Colonic mucosa (tissue), 4 donors: ENCODE measurements at regions of chrX and their contacts with region 1.

Region 1: DNA sequence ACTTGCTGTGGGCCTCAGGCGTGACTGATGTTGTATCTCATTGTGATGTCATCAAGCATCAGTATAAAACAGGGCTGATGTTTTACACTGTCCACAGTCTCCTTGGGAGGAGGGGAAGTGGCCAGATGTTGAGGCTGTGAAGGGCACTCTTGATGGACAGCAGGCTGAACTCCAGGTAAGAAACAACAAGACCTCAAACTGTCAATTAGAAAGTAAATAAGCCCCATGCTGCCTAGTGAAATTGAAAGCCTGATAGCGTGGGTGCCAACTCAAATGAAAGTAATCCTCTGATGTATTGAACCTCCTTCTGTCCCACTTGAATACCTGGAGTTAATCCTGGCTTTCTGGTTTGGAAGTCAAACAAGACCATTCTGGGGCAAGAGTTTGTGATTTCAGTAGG is 19.7 kb downstream of the VSIG1 start:
- DNase-seq: no peak
- H3K4me3 ChIP-seq: no peak overlapping the region
- H3K27ac ChIP-seq: no peak overlapping the region
- H3K4me1 ChIP-seq: no peaks in the 10 kb centered on the region
- H3K27me3 ChIP-seq: peaks cover 3% of the 10 kb centered on the region
- CTCF ChIP-seq: no peak

Region 2: GRCh38 chrX:108018656-108019381 is 45.8 kb before region 1 on chrX:
- intact Hi-C with region 1: loop called (anchors 5 kb)
- DNase-seq: no peak
- H3K4me3 ChIP-seq: no peak overlapping the region
- H3K27ac ChIP-seq: no peak overlapping the region
- H3K4me1 ChIP-seq: no peaks in the 10 kb centered on the region
- H3K27me3 ChIP-seq: no peaks in the 10 kb centered on the region
- CTCF ChIP-seq: no peak